ENCODE measurements at regions of chr20 and their contacts with region 1.

Region 1: GRCh38 chr20:32521780-32522525 is 63.2 kb downstream of the NOL4L start:
- DNase-seq: peak; percentile 70
- ATAC-seq: peak; percentile 88
- H3K4me3 Mint-ChIP-seq: no peak overlapping the region
- H3K27ac Mint-ChIP-seq: peak overlapping the region; percentile 59
- H3K4me1 Mint-ChIP-seq: peaks cover 52% of the 10 kb centered on the region
- H3K27me3 Mint-ChIP-seq: no peaks in the 10 kb centered on the region

Region 2: DNA sequence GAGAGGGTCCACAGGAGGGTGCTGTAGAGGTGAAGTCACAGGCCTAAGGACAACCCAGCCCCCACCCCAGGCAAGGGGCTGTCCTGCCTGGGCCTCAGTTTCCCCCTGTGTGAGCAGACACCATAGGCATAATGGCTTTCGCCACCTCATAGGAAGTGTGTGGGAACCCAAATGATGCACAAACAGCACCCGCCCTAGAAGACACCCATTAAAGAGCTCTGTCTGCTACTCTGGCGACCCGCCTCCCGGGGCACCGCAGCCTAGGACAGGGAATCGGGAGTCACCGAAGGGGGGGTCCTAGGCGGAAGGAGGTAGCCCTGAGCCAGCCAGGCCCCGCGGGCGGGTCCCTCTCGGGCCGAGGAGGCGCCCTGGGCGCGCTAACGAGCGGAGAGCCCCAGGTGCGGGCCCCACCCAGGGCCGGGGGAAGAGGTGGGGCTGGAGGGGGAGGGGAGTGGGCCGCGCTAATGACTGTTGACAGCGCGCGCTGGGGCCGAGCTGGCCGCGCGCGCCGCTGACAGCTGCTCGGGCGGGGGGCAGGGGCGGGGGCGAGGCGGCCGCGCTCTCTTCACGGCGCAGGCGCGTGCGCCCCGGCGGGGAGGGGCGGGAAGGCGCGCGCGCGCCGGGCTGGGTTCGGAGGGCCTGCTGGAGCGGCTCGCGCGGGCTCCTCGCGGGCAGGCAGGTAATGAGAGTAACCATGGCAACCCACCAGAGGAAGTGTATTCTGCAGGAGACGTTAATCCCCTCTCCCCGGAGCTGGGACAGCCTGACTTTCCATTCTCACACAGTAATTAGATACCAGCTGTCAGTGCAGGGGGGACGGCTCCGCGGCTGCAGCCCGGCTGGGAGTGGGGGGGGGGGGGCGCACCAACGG is 14.2 kb after region 1 on chr20:
- CTCF ChIA-PET with region 1: interaction called, 150 read pairs
- DNase-seq: peak; percentile 92
- ATAC-seq: peak; percentile 66
- H3K4me3 Mint-ChIP-seq: peak overlapping the region; percentile 89
- H3K27ac Mint-ChIP-seq: peak overlapping the region; percentile 96
- H3K4me1 Mint-ChIP-seq: peaks cover 70% of the 10 kb centered on the region
- H3K27me3 Mint-ChIP-seq: no peaks in the 10 kb centered on the region

Region 3: DNA sequence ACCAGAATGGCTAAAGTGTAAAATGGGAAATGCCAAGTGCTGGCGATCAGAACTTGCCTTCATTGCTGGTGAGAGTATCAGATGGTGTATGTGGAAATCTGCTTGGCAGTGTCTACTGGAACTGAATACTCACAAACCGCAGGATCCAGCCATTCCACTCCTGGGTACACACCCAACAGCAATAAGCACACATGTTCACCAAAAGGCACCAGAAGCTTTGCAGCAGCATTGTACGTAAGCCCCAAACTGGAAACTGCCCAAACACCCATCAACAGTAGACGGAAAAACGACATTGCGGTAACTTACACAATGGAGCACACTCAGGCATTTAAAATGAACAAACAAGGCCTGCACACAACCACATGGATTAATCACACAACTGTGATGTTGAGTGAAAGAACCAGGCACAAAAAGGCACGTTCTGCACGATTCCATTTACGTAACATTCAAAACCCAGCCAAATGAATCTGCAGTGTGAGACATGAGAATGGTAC is 608.7 kb after region 1 on chr20:
- CTCF ChIA-PET with region 1: no interaction called
- DNase-seq: no peak
- ATAC-seq: no peak
- H3K4me3 Mint-ChIP-seq: no peak overlapping the region
- H3K27ac Mint-ChIP-seq: no peak overlapping the region
- H3K4me1 Mint-ChIP-seq: no peaks in the 10 kb centered on the region
- H3K27me3 Mint-ChIP-seq: peaks cover 21% of the 10 kb centered on the region